CD8-positive, alpha-beta T cell (primary cell): ENCODE measurements at regions of chr20 and their contacts with region 1.

Region 1: GRCh38 chr20:6253396-6253795 is 130.6 kb upstream of the FERMT1 start:
- DNase-seq: no peak
- ATAC-seq: no peak
- H3K4me3 ChIP-seq: no peak overlapping the region
- H3K4me3 Mint-ChIP-seq: no peak overlapping the region
- H3K27ac ChIP-seq: no peak overlapping the region
- H3K27ac Mint-ChIP-seq: no peak overlapping the region
- H3K4me1 ChIP-seq: no peaks in the 10 kb centered on the region
- H3K4me1 Mint-ChIP-seq: no peaks in the 10 kb centered on the region
- H3K27me3 ChIP-seq: no peaks in the 10 kb centered on the region
- H3K27me3 Mint-ChIP-seq: no peaks in the 10 kb centered on the region
- CTCF ChIP-seq: no peak

Region 2: DNA sequence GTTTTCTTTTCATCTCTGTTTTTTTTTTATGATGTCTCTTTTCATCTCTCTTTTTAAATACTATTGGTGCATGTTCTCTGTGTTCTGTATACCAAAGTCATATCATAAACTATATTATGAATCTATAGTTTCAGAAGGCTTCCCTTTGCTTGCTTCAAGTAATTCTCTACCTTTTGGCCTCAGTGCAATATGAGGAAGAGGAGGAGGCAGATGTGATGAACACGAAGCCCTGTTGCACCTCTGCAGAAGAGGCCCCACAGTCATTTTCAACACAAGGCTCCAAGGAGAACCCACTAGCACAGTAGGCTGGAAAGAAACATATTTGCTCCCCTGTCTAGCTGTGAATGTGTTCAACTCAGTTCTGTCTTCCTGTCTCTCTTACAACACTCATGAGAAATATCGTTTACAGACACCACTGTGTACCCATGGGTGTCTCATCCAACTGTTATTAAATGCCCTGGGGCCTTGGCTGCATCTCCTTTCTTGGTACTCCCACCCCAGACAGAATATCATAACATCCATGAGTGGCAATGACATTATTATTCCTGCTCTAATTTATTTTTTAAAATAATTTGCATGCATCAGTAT is 625.8 kb before region 1 on chr20:
- CTCF ChIA-PET with region 1: no interaction called
- POLR2A ChIA-PET with region 1: no interaction called
- intact Hi-C with region 1: no loop called
- DNase-seq: no peak
- ATAC-seq: no peak
- H3K4me3 ChIP-seq: no peak overlapping the region
- H3K4me3 Mint-ChIP-seq: no peak overlapping the region
- H3K27ac ChIP-seq: no peak overlapping the region
- H3K27ac Mint-ChIP-seq: no peak overlapping the region
- H3K4me1 ChIP-seq: no peaks in the 10 kb centered on the region
- H3K4me1 Mint-ChIP-seq: no peaks in the 10 kb centered on the region
- H3K27me3 ChIP-seq: no peaks in the 10 kb centered on the region
- H3K27me3 Mint-ChIP-seq: peaks cover 2% of the 10 kb centered on the region
- CTCF ChIP-seq: no peak

Region 3: DNA sequence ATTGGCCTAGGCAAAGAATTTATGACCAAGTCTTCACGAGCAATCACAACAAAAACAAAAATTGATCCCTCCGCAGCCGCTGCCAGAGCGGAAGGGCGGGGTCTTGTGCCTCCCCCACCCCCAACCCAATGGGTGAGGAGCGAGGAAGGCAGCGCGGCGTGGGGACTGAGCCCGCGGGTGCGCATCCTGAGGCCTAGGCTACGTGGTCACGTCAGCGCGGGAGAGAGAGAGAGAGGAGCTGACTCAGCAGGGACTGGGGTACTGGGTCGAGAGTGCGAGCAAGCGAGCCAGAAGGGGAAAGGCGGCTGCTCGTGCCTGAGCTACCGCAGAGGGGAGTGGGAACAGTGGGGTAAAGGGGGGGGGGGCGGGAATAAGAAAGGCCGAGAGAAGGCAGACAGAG is 40.5 kb before region 1 on chr20:
- CTCF ChIA-PET with region 1: no interaction called
- POLR2A ChIA-PET with region 1: no interaction called
- intact Hi-C with region 1: loop called in 1 of 2 experiments (anchors 2 kb)
- DNase-seq: no peak
- ATAC-seq: no peak
- H3K4me3 ChIP-seq: no peak overlapping the region
- H3K4me3 Mint-ChIP-seq: no peak overlapping the region
- H3K27ac ChIP-seq: no peak overlapping the region
- H3K27ac Mint-ChIP-seq: no peak overlapping the region
- H3K4me1 ChIP-seq: no peaks in the 10 kb centered on the region
- H3K4me1 Mint-ChIP-seq: no peaks in the 10 kb centered on the region
- H3K27me3 ChIP-seq: no peaks in the 10 kb centered on the region
- H3K27me3 Mint-ChIP-seq: peaks cover 5% of the 10 kb centered on the region
- CTCF ChIP-seq: no peak